ENCODE measurements at regions of chr17 and their contacts with region 1.

Region 1: DNA sequence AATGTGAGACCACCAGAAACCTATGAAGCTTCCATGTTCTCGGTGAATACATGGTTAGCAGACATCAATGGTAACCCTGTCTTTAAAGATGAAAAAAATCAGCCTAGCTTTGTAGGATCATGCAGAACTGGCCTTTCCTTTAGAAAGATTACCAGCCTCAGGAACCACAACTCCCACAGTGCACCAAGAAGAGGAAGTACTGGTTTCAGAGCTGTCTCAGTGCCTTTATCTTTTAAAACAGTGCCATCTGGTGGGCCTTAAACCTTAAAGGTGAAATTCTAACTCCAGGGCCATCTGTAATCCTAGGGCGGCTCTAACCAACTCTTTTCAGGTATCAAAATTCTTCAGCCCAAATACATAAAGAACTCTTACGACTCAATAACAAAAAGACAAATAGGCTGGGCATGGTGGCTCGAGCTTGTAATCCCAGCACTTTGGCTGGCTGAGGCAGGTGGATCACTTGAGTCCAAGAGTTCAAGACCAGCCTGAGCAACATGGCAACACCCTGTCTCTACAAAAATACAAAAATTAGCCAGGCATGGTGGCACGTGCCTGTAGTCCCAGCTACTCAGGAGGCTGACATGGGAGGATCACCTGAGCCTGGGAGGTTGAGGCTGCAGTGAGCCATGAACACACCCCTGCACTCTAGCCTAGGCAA is 5.4 kb downstream of the ATPAF2 start:
- DNase-seq: peak; percentile 72
- H3K4me3 Mint-ChIP-seq: no peak overlapping the region
- H3K27ac Mint-ChIP-seq: no peak overlapping the region
- H3K4me1 Mint-ChIP-seq: peaks cover 41% of the 10 kb centered on the region
- H3K27me3 Mint-ChIP-seq: no peaks in the 10 kb centered on the region

Region 2: DNA sequence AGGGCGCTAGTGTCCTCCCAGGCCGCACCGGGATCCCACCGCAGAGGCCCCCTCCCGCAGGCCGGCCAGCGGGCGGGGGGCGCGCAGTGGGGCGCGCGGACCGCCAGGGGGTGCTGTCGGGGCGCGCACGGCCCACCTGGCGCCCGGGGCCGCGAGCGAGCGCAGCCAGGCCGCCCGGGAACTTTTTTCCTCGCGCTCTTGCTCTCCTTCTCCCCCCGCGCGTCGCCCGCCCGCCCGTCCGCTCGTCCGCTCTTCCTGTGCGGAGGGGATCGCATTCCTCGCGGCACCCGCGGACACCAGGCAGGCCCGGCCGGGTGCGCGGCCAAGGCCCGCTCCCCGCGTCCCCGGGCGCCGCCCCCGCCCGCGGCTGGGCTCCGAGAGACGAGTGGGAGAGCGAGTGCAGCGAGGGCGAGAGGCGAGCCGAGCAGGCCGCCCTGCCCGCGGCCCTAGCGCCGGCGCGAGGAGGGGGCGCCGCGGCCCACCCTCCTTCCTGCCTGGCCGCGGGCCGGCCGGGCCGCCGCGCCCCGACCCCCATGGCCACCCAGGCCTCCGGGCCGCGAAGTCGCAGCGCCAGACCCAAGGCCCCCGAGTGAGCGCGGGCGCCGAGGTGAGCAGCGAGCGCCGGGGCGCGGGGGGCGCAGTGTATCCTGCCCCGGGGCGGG is 352.3 kb before region 1 on chr17 and contains the start of gene RAI1:
- CTCF ChIA-PET with region 1: interaction called, 16 read pairs
- DNase-seq: peak; percentile 76
- H3K4me3 Mint-ChIP-seq: peak within 1 kb of the TSS; percentile 88
- H3K27ac Mint-ChIP-seq: peak within 1 kb of the TSS; percentile 85
- H3K4me1 Mint-ChIP-seq: peaks cover 37% of the 10 kb centered on the region
- H3K27me3 Mint-ChIP-seq: peaks cover 27% of the 10 kb centered on the region

Region 3: DNA sequence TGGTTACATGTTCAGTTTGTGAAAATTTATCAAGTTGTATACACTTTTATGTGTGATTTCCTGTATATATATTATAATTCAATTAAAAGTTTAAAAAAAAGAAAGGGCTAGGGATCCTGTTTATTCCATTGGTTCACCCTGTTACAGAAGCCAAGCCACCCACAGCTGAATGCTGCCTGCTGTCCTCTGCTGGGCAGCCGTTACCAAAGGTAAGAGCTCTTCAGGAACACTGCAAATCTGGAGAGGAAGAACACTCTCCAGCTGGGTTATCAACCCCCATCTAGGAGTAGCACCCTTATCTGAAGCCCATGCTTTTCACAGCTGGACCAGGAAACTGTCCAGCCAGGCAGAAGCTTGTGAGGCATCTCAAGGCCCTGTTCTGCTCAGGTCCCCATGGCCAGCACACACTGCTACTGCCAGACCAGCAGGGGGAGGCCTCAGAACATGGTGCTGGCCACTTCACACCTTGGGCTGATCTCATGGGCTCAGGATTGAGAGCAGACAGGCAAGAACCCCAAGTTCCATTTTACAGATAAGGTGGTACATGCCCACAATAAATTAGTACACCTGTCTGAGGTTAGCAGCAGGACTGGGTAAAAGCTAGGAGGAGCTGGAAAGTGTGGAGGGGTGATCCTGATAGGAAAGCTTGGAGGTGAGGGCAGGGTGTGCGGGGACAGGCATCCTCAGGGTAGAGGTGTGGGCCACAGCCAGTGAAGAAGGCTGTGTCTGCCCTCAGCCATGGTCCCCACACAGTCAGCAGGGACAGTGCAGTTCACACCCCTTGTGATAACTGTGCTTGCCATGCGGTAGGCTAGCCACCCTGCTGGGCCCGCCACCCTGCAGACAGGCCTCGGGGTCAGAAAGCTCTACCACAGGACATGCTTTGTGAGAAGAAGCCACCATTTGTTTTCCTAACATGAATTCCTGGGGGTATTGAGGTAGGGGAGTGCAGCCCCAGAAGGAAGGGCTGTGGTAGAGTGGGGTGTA is 142.5 kb before region 1 on chr17:
- CTCF ChIA-PET with region 1: interaction called, 43 read pairs
- DNase-seq: peak; percentile 70
- H3K4me3 Mint-ChIP-seq: no peak overlapping the region
- H3K27ac Mint-ChIP-seq: peak overlapping the region; percentile 78
- H3K4me1 Mint-ChIP-seq: peaks cover 7% of the 10 kb centered on the region
- H3K27me3 Mint-ChIP-seq: no peaks in the 10 kb centered on the region

Region 4: GRCh38 chr17:17919169-17920107 is 114.1 kb before region 1 on chr17:
- CTCF ChIA-PET with region 1: interaction called, 10 read pairs
- DNase-seq: peak; percentile 83
- H3K4me3 Mint-ChIP-seq: no peak overlapping the region
- H3K27ac Mint-ChIP-seq: no peak overlapping the region
- H3K4me1 Mint-ChIP-seq: peaks cover 16% of the 10 kb centered on the region
- H3K27me3 Mint-ChIP-seq: no peaks in the 10 kb centered on the region

Region 5: GRCh38 chr17:18141210-18141803 is 107.7 kb after region 1 on chr17:
- CTCF ChIA-PET with region 1: no interaction called
- DNase-seq: peak; percentile 48
- H3K4me3 Mint-ChIP-seq: no peak overlapping the region
- H3K27ac Mint-ChIP-seq: no peak overlapping the region
- H3K4me1 Mint-ChIP-seq: no peaks in the 10 kb centered on the region
- H3K27me3 Mint-ChIP-seq: peaks cover 32% of the 10 kb centered on the region